Activated CD4-positive, alpha-beta T cell treated with anti-CD3 and anti-CD28 coated beads for 36 hours (primary cell): ENCODE measurements at regions of chr1 and their contacts with region 1.

Region 1: GRCh38 chr1:1919304-1920056 is 401 bp upstream of the TMEM52 start:
- DNase-seq: peak; percentile 100
- ATAC-seq: peak; percentile 92
- H3K4me3 Mint-ChIP-seq: peak overlapping the region; percentile 62
- H3K27ac Mint-ChIP-seq: no peak overlapping the region
- H3K4me1 Mint-ChIP-seq: peaks cover 4% of the 10 kb centered on the region
- H3K27me3 Mint-ChIP-seq: no peaks in the 10 kb centered on the region

Region 2: DNA sequence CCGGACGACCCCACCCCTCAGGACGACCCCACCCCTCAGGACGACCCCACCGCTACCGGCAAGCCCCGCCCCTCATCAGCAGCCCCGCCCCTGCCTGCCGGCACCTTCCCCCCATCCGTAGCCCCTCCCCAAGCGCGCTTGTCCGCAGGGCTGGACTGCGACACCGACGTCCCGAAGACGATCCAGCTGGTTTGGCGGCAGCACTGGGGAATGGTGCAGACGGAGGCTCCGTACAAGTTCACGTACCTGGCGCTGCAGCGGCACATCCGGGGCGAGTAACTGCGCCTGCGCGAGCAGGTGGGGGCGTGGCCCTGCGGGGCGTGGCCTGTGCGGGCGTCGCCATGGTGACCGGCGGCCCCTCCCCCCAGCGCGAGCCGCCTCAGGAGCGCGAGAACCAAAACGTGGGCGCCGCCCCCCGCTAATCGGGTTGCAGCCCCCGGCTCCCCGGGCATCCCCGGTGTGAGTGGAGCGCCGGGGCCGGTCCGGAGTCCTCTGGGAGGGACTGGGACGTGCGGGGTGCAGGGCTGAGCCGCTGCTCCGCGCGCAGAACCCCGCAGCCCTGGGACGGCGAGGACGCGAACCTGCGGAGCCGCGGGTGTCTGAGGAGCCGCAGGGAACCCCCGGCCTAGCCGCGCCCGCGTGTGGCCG is 850.3 kb before region 1 on chr1:
- CTCF ChIA-PET with region 1: no interaction called
- POLR2A ChIA-PET with region 1: no interaction called
- intact Hi-C with region 1: loop called in 1 of 2 experiments (anchors 1 kb)
- DNase-seq: peak; percentile 94
- ATAC-seq: peak; percentile 47
- H3K4me3 Mint-ChIP-seq: peak overlapping the region; percentile 71
- H3K27ac Mint-ChIP-seq: no peak overlapping the region
- H3K4me1 Mint-ChIP-seq: peaks cover 11% of the 10 kb centered on the region
- H3K27me3 Mint-ChIP-seq: no peaks in the 10 kb centered on the region

Region 3: GRCh38 chr1:2049718-2050427 is 130.4 kb after region 1 on chr1 and contains the start of gene PRKCZ:
- CTCF ChIA-PET with region 1: no interaction called
- POLR2A ChIA-PET with region 1: no interaction called
- intact Hi-C with region 1: loop called in 1 of 2 experiments (anchors 1 kb)
- DNase-seq: peak; percentile 95
- ATAC-seq: peak; percentile 98
- H3K4me3 Mint-ChIP-seq: peak within 1 kb of the TSS; percentile 68
- H3K27ac Mint-ChIP-seq: no peak within 1 kb of the TSS
- H3K4me1 Mint-ChIP-seq: peaks cover 24% of the 10 kb centered on the region
- H3K27me3 Mint-ChIP-seq: peaks cover 14% of the 10 kb centered on the region
- total RNA-seq, gene PRKCZ: 9.8 to 10.9 TPM

Region 4: DNA sequence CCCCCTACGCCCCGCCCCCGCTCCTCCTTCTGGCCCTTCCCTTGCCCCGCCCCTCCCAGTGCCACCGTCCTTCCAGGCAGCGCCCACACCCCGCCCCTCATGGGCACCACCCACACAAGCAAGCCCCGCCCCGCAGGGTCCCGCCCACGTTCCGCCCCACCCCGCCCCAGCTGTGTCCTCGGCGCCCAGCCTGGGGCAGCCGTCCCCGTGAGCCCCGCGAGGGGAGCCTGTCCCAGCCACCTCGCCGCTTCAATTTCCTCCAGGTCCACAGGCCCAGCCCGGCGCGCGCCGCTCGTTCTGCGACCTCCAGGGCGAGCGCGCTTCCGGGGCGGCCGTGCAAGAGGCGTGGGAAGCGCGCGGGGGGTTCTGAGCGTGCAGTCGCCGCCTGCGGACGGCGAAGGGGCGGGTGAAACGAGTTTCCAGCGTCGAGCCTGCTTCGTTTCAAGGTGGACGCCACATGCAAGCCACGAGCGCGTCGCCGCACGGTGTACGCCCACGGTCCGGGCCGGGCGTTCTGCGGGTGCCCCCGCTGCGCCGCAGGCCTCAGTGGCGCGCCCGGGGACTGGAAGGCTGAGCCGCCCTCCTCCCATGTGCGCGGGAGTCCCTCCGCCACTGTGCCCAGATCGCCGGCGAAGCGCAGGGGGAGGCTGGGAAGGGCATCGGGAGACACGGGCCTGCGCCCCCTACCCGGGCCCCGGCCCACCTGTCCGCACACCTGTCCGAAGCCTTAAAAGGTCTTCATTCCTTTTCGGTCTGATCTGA is 285.9 kb after region 1 on chr1:
- CTCF ChIA-PET with region 1: no interaction called
- POLR2A ChIA-PET with region 1: no interaction called
- intact Hi-C with region 1: loop called in 1 of 2 experiments (anchors 1 kb)
- DNase-seq: peak; percentile 98
- ATAC-seq: peak; percentile 88
- H3K4me3 Mint-ChIP-seq: peak overlapping the region; percentile 51
- H3K27ac Mint-ChIP-seq: no peak overlapping the region
- H3K4me1 Mint-ChIP-seq: peaks cover 3% of the 10 kb centered on the region
- H3K27me3 Mint-ChIP-seq: no peaks in the 10 kb centered on the region